Activated T-helper 1 cell treated with anti-CD3 and anti-CD28 coated beads, Interleukin-12 subunit alpha, Interleukin-12 subunit beta, Interleukin-2, Interleukin-4 antibody, amounts not matched to agents 30 ng/mL and 10 ng/mL and 1 ng/mL, durations not matched to agents 14 hours and 24 hours and 36 hours (primary cell): ENCODE measurements at regions of chr17 and their contacts with region 1.

Region 1: GRCh38 chr17:81553018-81553615 is 964 bp upstream of the FAAP100 start:
- DNase-seq: peak; percentile 67
- H3K4me3 Mint-ChIP-seq: peak overlapping the region; percentile 92
- H3K27ac Mint-ChIP-seq: peak overlapping the region; percentile 91
- H3K4me1 Mint-ChIP-seq: peaks cover 41% of the 10 kb centered on the region
- H3K27me3 Mint-ChIP-seq: no peaks in the 10 kb centered on the region

Region 2: DNA sequence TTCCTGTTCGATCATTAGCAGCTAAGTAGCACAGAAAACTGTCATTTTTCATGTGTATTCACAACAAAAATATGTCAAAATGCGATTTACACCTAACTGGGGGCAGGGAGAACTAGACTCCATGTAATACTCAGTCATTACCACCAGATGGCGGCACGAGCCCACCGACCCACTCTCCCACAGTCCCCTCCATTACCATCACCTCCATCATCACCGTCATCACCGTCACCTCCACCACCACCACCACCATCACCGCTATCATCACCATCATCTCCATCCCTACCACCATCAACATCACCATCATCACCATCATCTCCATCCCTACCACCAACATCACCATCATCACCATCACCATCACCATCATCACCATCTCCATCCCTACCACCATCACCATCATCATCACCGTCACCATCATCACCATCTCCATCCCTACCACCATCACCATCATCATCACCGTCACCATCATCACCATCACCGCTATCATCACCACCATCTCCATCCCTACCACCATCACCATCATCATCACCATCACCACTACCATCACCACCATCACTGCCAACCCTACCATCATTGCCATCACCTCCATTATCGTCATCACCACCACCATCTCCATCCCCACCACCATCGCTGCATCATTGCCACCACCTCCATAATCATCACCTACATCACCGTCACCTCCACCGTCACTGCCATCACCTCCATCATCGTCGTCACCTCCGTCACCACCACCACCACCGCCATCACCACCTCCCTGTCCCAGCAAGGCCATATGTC is 299.6 kb before region 1 on chr17:
- intact Hi-C with region 1: loop called (anchors 1 kb)
- DNase-seq: peak; percentile 38
- H3K4me3 Mint-ChIP-seq: no peak overlapping the region
- H3K27ac Mint-ChIP-seq: peak overlapping the region; percentile 14
- H3K4me1 Mint-ChIP-seq: no peaks in the 10 kb centered on the region
- H3K27me3 Mint-ChIP-seq: no peaks in the 10 kb centered on the region

Region 3: GRCh38 chr17:81419328-81419885 is 133.7 kb before region 1 on chr17:
- intact Hi-C with region 1: no loop called
- DNase-seq: no peak
- H3K4me3 Mint-ChIP-seq: no peak overlapping the region
- H3K27ac Mint-ChIP-seq: no peak overlapping the region
- H3K4me1 Mint-ChIP-seq: no peaks in the 10 kb centered on the region
- H3K27me3 Mint-ChIP-seq: peaks cover under 1% of the 10 kb centered on the region

Region 4: DNA sequence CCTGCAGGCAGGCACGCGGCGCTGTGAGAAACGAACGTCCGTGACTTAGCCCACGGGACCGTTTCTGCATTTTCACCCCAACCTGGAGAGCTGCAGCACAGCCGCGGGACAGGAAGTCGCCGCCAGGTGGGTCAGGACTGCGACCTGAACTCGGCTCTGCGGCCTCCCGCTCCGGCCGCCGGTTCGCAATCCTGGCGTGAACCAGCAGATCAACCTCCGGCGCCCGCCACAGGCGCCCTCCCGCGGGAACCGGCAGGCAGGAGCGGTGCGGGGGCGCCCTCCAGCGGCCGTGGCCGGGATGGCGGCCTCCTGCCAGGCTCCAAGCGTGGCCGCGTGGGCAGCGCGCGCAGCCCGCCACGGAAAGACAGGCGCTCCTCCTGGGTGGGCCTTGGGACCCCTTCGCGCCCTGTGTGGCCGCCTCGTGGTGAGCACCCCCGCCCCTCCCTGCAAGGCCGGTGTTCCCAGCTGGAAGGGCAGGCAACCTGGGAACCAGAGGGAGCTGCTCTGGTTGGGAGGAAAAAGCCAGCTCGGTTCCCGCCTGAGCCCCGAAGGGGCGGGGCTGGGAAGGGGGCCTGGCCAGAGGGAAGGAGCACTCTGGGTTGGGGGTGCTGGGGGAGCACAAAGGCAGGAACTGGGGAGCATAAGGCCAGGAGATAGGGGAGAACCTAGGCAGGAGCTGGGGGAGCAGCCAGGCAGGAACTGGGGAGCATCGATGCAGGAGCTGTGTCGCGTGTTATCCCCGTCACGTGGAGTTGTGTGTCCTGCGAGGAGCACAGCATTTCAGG is 68.7 kb before region 1 on chr17:
- intact Hi-C with region 1: loop called (anchors 1 kb)
- DNase-seq: peak; percentile 86
- H3K4me3 Mint-ChIP-seq: no peak overlapping the region
- H3K27ac Mint-ChIP-seq: no peak overlapping the region
- H3K4me1 Mint-ChIP-seq: no peaks in the 10 kb centered on the region
- H3K27me3 Mint-ChIP-seq: peaks cover 30% of the 10 kb centered on the region

Region 5: GRCh38 chr17:81683584-81684237 is 130.6 kb after region 1 on chr17 and contains the starts of genes ARL16 and HGS:
- intact Hi-C with region 1: loop called (anchors 1 kb)
- DNase-seq: peak; percentile 98
- H3K4me3 Mint-ChIP-seq: peak within 1 kb of the TSS; percentile 97
- H3K27ac Mint-ChIP-seq: peak within 1 kb of the TSS; percentile 95
- H3K4me1 Mint-ChIP-seq: peaks cover 22% of the 10 kb centered on the region
- H3K27me3 Mint-ChIP-seq: no peaks in the 10 kb centered on the region
- total RNA-seq, gene ARL16: 37.6 and 40.0 TPM in 2 replicates
- total RNA-seq, gene HGS: 133 and 144 TPM in 2 replicates